ENCODE measurements at regions of chr10 and their contacts with region 1.

Region 1: GRCh38 chr10:62492012-62492869 is 118.1 kb downstream of the ZNF365 start:
- DNase-seq: peak; percentile 16
- ATAC-seq: peak; percentile 71
- H3K4me3 ChIP-seq: no peak overlapping the region
- H3K27ac ChIP-seq: no peak overlapping the region
- H3K4me1 ChIP-seq: peaks cover 12% of the 10 kb centered on the region
- H3K27me3 ChIP-seq: no peaks in the 10 kb centered on the region
- CTCF ChIP-seq: peak; percentile 57
- EP300 ChIP-seq: no peak
- POLR2A ChIP-seq: no peak
- RAD21 ChIP-seq: no peak

Region 2: DNA sequence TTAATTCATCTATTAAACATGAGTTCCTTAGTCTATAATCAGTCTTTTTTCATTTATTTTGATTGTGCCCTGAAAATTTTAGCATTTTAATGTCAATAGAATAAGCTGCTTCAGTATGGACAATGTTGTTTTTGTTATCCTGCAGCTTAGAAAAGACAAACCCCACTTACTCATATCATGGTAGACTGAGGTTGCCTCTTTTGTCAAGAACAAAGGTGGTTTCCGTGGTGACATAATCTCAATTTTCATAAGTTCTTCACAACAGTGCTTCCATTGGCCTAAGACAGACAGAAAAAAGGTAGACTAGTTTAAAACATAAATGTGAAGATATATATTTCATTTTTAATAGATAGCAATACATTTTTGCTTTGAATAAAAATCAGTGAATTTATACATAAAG is 292.7 kb before region 1 on chr10:
- CTCF ChIA-PET with region 1: no interaction called
- POLR2A ChIA-PET with region 1: no interaction called
- in situ Hi-C with region 1: no loop called
- intact Hi-C with region 1: loop called (anchors 5 kb)
- DNase-seq: peak; percentile 11
- ATAC-seq: no peak
- H3K4me3 ChIP-seq: no peak overlapping the region
- H3K27ac ChIP-seq: no peak overlapping the region
- H3K4me1 ChIP-seq: 0 out of 2 replicates have a peak, but pooled peaks cover 6% of the 10 kb centered on the region
- H3K27me3 ChIP-seq: no peaks in the 10 kb centered on the region
- CTCF ChIP-seq: no peak
- EP300 ChIP-seq: no peak
- POLR2A ChIP-seq: no peak
- RAD21 ChIP-seq: no peak

Region 3: DNA sequence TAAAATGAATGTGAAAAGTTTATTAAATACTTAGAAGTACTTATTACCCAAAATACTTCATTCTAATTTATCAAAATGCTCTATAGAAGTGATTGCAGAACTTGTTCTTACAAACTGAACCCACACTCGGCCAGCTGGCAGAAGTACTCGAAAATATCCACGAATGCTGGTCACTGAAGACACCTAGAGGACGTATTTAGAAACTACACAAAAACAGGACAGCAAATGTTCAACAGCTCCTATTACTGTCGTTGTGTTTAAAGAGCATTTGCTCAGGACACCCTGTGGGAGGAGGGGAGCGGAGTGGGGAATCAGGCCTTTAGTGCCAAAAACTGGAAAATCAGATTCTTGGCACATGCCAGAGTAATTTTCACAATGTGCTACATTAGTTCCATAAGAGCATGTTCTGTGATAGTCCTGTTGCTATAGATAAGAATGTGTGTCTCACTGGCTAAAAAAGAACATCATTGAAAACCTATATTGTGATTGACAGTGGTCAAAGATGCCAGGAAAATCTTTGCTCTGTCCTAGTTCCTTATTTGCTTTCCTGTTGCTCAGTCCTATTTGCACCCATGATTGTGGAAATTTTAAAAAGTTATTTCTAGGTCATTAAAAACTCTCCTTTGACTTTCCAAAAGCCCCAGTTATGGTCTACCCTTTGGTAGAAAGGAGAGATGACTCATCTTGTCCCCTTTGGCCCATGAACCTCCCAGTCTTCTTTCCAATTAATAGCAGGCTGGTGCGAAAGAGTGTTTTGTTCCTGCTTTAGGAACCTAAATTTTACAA is 591.9 kb after region 1 on chr10:
- CTCF ChIA-PET with region 1: no interaction called
- POLR2A ChIA-PET with region 1: no interaction called
- in situ Hi-C with region 1: no loop called
- intact Hi-C with region 1: loop called (anchors 10 kb)
- DNase-seq: peak; percentile 62
- ATAC-seq: peak; percentile 93
- H3K4me3 ChIP-seq: no peak overlapping the region
- H3K27ac ChIP-seq: no peak overlapping the region
- H3K4me1 ChIP-seq: no peaks in the 10 kb centered on the region
- H3K27me3 ChIP-seq: no peaks in the 10 kb centered on the region
- CTCF ChIP-seq: peak; percentile 78
- EP300 ChIP-seq: no peak
- POLR2A ChIP-seq: no peak
- RAD21 ChIP-seq: peak; percentile 46; the same call in 1 of the 2 replicates

Measured in HepG2 (cell line).